ENCODE measurements at regions of chr9 and their contacts with region 1.

Region 1: GRCh38 chr9:6008169-6008979 is 7.0 kb downstream of the RANBP6 start:
- DNase-seq: peak; percentile 99
- H3K4me3 ChIP-seq: peak overlapping the region; percentile 89 to 98 (median 95)
- H3K27ac ChIP-seq: peak overlapping the region; percentile 99 to 100 (median 99)
- H3K4me1 ChIP-seq: peaks cover 0 to 56% (median 36%) of the 10 kb centered on the region in 4 donors
- H3K27me3 ChIP-seq: no peaks in the 10 kb centered on the region
- CTCF ChIP-seq: no peak
- EP300 ChIP-seq: no peak
- POLR2A ChIP-seq: peak in 1 of 2 donors; percentile 39

Region 2: GRCh38 chr9:5628530-5629311 is 379.7 kb before region 1 on chr9 and contains the start of gene RIC1:
- intact Hi-C with region 1: loop called (anchors 2 kb)
- DNase-seq: peak; percentile 97
- H3K4me3 ChIP-seq: peak within 1 kb of the TSS; percentile 55 to 90 (median 88)
- H3K27ac ChIP-seq: peak within 1 kb of the TSS; percentile 92 to 98 (median 98)
- H3K4me1 ChIP-seq: peaks cover 0 to 62% (median 42%) of the 10 kb centered on the region in 4 donors
- H3K27me3 ChIP-seq: no peaks in the 10 kb centered on the region
- CTCF ChIP-seq: no peak
- EP300 ChIP-seq: no peak
- POLR2A ChIP-seq: peak; percentile 78 to 82
- total RNA-seq, gene RIC1: 29.1 to 44.3 (median 32.3) TPM

Region 3: GRCh38 chr9:6215562-6215961 is 207.2 kb after region 1 on chr9 and contains the start of gene IL33:
- intact Hi-C with region 1: loop called (anchors 5 kb)
- DNase-seq: peak; percentile 73
- H3K4me3 ChIP-seq: peak within 1 kb of the TSS; percentile 21 to 51 (median 42)
- H3K27ac ChIP-seq: peak within 1 kb of the TSS; percentile 73 to 87 (median 78)
- H3K4me1 ChIP-seq: peaks cover 0 to 39% (median 30%) of the 10 kb centered on the region in 4 donors
- H3K27me3 ChIP-seq: no peaks in the 10 kb centered on the region
- CTCF ChIP-seq: no peak
- EP300 ChIP-seq: no peak
- POLR2A ChIP-seq: no peak
- total RNA-seq, gene IL33: 33.5 to 73.2 (median 45.8) TPM

Region 4: DNA sequence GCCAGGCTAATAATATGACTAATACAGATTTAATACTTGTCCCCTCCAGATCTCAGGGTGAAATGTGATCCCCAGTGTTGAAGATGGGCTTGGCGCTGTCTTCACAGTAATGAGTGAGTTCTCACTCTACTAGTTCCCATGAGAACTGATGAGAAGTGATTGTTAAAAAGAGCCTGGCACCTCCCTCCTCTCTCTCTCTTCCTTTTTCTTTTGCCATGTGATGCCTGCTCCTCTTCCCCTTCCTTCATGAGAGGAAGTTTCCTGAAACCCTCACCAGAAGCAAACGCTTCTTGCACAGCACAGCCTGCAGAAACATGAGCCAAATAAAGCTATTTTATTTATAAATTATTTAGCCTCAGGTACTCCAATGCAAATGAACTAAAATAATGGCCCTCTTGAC is 582.0 kb after region 1 on chr9:
- intact Hi-C with region 1: no loop called
- DNase-seq: no peak
- H3K4me3 ChIP-seq: no peak overlapping the region
- H3K27ac ChIP-seq: no peak overlapping the region
- H3K4me1 ChIP-seq: no peaks in the 10 kb centered on the region
- H3K27me3 ChIP-seq: no peaks in the 10 kb centered on the region
- CTCF ChIP-seq: no peak
- EP300 ChIP-seq: no peak
- POLR2A ChIP-seq: no peak

Region 5: GRCh38 chr9:6681147-6681956 is 673.0 kb after region 1 on chr9:
- intact Hi-C with region 1: loop called (anchors 5 kb)
- DNase-seq: peak; percentile 99
- H3K4me3 ChIP-seq: peak overlapping the region; percentile 54 to 73 (median 68)
- H3K27ac ChIP-seq: peak overlapping the region; percentile 95 to 98 (median 96)
- H3K4me1 ChIP-seq: peaks cover 0 to 7% (median 7%) of the 10 kb centered on the region in 4 donors
- H3K27me3 ChIP-seq: no peaks in the 10 kb centered on the region
- CTCF ChIP-seq: no peak
- EP300 ChIP-seq: peak in 1 of 4 donors; percentile 4
- POLR2A ChIP-seq: peak; percentile 56 to 65

Measured in sigmoid colon (tissue), 7 donors.